A673 (cell line): ENCODE measurements at regions of chrX and their contacts with region 1.

Region 1: DNA sequence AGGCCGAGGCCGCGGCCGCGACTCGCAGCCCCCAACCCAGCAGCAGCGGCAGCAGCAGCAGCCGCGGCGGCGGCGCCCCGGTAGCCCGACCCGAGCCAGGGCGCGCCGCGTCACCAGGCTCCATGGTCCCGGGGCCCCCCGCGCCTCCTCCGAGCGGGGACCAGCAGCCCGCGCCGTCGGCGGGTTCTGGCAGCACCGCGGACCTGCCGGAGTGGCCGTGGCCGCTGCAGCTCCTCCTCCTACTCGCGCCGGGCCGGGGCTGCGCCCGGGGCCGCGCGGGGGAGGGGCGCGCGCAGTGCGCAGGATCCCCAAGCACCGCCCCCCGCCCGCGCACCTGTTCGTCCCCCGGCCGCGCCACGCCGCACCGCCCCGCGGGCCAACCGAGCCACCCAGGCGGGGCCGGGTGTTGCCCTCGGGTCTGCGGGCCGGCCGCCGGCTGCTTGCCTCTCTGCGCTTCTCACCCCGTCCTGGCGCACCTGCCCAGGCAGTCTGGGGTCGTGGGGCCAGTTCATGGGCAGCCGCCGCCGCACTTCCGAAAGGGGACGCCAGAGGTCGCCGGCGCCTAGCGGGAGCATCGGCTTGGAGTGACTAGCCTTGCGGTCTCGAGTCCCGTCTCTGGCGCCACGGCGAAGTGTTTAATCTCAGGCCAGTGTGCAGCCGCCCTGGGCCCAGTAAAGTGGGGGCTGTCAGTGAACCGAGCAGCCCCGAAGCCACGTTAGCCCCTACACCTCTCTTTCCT is at the start of gene SLC9A7:
- DNase-seq: peak; percentile 77
- H3K4me3 ChIP-seq: peak within 1 kb of the TSS; percentile 57
- H3K27ac ChIP-seq: no peak within 1 kb of the TSS
- H3K4me1 ChIP-seq: no peaks in the 10 kb centered on the region
- H3K27me3 ChIP-seq: no peaks in the 10 kb centered on the region
- CTCF ChIP-seq: peak; percentile 70
- total RNA-seq, gene SLC9A7: 11.3 and 13.1 TPM in 2 replicates

Region 2: GRCh38 chrX:47030339-47030738 is 271.3 kb after region 1 on chrX:
- CTCF ChIA-PET with region 1: no interaction called
- POLR2A ChIA-PET with region 1: no interaction called
- intact Hi-C with region 1: loop called (anchors 2 kb)
- DNase-seq: peak; percentile 85
- H3K4me3 ChIP-seq: no peak overlapping the region
- H3K27ac ChIP-seq: no peak overlapping the region
- H3K4me1 ChIP-seq: no peaks in the 10 kb centered on the region
- H3K27me3 ChIP-seq: no peaks in the 10 kb centered on the region
- CTCF ChIP-seq: peak; percentile 76

Region 3: DNA sequence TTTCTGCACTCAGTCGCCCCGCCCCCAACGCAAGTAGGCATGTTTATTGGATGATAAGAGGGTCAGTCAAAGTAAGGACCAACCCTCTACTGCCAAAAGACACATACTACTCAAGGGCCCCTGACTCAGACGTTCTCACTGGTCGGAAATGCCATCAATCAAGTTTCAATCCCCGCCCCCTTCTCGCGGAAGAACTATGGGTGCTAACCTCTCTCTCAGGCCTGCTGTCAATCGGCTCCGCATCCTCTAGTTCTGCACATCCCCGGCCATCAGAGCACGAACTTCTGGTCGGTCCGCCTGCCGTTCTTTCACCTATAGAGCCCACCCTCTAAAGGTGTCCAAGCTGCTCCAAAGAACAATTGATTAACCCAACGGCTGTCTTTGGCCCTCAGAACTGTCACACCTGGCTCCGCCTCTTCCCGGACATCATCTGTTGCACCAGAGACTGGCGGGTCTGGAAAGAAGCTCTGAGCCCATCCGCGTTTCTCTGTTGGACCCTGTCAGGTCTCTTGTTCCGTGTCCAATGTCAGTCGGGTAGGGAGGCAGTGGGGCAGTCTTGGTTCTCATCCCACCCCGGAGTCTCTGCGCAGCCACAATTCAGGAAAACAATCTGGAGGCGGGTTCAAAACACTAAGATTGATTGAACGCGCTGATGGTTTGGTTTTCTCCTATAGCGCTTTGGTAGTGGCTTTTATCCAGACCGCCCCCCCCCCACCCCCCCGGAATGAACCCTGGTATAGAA is 370.3 kb after region 1 on chrX:
- CTCF ChIA-PET with region 1: no interaction called
- POLR2A ChIA-PET with region 1: no interaction called
- intact Hi-C with region 1: no loop called
- DNase-seq: peak; percentile 96
- H3K4me3 ChIP-seq: peak overlapping the region; percentile 50
- H3K27ac ChIP-seq: peak overlapping the region; percentile 17
- H3K4me1 ChIP-seq: no peaks in the 10 kb centered on the region
- H3K27me3 ChIP-seq: no peaks in the 10 kb centered on the region
- CTCF ChIP-seq: no peak

Region 4: DNA sequence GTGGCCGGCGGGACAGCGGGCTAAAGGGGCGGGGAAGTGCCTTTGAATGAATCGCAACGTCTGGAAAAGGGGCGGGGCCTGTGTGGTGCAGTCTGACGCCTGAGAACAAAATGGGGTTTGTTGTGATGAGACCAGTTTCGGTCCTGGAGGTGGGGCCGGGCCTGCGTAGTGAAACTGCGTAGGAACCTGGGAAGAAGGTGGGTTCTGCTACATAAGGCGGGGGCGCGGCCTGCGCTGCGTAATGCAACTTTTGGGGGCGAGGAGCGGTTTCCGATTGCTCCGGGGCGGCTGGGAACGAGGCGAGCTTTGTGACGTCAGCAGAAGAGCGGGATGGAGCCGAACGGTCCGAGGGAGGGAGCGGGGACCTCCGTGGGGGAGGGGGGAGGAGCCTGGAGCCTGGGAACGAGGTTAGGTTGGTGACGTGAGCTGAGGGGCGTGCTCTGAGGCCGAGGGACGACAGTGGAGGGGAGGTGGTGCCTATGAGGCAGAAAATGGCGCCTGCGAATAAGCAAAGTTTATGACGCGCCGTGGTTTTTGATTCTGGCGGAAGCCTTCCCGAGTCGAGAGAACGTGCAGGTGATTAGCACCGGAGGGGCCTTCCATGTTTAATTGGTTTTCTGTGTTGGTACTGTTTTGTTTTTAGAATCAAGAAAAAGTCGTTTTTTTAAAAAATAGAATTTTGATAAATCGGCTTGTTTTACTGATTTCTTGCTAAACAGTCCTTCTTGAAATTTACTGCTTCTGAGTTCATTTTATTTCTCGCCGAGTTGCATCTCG is 474.4 kb after region 1 on chrX:
- CTCF ChIA-PET with region 1: no interaction called
- POLR2A ChIA-PET with region 1: no interaction called
- intact Hi-C with region 1: no loop called
- DNase-seq: peak; percentile 95
- H3K4me3 ChIP-seq: peak overlapping the region; percentile 73
- H3K27ac ChIP-seq: peak overlapping the region; percentile 98
- H3K4me1 ChIP-seq: no peaks in the 10 kb centered on the region
- H3K27me3 ChIP-seq: no peaks in the 10 kb centered on the region
- CTCF ChIP-seq: no peak